Activated CD8-positive, alpha-beta T cell treated with anti-CD3 and anti-CD28 coated beads for 36 hours (primary cell): ENCODE measurements at regions of chr2 and their contacts with region 1.

Region 1: DNA sequence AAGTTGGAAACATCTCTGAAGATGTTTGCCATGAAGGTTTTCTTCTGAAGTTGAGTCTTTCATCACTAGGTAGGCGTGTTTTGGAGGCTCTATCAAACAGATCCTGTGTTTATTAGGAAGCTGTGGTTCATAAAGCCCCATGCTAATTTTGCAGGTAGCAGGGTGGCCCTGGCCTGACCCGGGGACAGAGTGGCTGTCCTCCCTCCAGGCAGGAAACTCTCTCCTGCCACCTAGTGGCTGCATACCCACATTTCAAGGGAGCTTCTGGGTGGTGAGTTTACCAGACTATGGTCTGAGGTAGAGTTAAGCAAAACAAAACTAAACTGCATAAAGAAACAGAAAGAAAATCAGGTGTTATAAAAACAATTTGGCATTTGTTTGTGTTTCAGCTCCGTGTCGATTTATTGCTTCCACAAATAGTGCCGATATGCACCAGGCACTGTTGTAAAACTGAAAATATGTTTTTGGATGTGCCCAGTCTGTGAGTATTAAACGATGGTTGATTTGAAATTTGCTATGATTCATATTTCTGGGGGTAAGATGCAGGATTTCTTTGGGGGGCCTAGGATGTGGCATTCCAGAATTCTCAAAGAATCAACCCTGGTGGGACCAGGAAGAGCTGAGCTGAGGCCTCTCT is 26.0 kb upstream of the IL37 start:
- DNase-seq: peak; percentile 81
- ATAC-seq: peak; percentile 79
- H3K4me3 Mint-ChIP-seq: no peak overlapping the region
- H3K27ac Mint-ChIP-seq: no peak overlapping the region
- H3K4me1 Mint-ChIP-seq: peaks cover 23% of the 10 kb centered on the region
- H3K27me3 Mint-ChIP-seq: no peaks in the 10 kb centered on the region
- CTCF ChIP-seq: peak; percentile 95

Region 2: DNA sequence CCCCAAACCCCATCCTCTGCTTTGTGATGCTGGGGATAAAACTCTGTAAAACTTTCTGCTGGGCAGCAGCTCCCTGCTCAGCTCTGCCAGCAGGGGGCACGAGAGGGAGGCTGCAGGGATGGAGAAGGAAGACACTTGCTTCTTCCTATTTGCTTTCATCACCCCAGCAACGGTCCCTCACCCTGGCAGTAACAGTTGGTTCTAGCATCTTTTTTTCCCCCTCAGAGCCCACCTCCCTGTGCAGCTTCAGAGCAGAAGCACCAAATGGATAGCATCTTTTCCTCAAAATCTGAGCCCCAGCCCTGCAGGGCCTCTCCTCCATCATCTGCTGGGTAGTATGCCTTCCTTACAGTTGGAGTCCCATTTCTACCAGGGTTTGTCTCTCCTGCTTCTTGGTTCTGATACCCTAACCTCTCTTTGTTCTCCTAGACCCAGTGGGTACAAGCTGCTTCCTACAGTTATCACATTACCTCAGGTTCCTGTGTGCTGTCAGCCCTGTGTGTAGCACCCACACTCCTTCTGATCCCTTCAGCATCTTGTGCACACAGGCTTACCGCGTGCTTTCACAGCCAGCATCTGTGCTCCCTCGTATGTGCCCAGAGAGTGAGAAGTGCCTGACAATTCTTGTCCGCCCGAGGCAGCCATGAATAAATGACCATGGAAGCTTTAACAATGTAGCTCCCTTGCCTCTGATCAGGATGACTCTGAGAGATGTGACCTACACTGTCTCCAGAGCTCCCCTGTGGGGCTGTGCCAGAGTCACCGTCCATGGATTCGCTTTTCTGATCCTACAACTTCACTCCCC is 135.0 kb before region 1 on chr2:
- CTCF ChIA-PET with region 1: interaction called, 102 read pairs
- POLR2A ChIA-PET with region 1: no interaction called
- intact Hi-C with region 1: loop called (anchors 2 kb)
- DNase-seq: peak; percentile 83
- ATAC-seq: peak; percentile 89
- H3K4me3 Mint-ChIP-seq: no peak overlapping the region
- H3K27ac Mint-ChIP-seq: peak overlapping the region; percentile 1
- H3K4me1 Mint-ChIP-seq: peaks cover 14% of the 10 kb centered on the region
- H3K27me3 Mint-ChIP-seq: no peaks in the 10 kb centered on the region
- CTCF ChIP-seq: peak; percentile 97

Region 3: DNA sequence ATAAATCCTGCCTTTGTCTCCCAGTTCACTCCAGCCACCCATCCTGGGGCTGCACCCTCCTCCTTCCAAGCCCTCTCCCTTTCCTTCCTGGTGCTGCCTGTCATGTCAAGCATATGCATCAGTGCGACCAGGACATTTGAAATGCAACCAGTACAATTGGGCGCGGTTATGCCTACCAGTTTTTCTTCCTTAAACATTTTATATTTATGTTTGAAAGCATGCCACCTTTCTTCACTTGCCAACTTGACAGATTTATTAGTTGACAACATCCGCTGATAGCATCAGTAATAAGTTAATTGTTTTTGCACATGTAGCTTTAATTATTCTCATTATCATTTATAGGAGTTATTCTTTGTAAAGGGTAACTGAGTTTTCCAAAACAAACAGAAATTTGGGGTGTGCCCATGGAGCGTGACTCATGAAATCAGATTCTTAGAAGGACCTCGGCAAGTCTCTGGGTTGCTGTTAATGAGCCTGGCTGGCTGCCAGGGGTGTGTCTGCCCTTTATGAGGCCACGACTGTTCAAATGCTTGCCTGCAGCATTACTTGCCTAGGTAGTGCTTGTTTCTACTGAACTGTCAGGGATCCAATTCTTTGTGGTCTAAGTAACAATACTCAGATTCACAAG is 15.6 kb before region 1 on chr2:
- CTCF ChIA-PET with region 1: interaction called, 11 read pairs
- POLR2A ChIA-PET with region 1: no interaction called
- intact Hi-C with region 1: no loop called
- DNase-seq: peak; percentile 79
- ATAC-seq: peak; percentile 71
- H3K4me3 Mint-ChIP-seq: no peak overlapping the region
- H3K27ac Mint-ChIP-seq: no peak overlapping the region
- H3K4me1 Mint-ChIP-seq: no peaks in the 10 kb centered on the region
- H3K27me3 Mint-ChIP-seq: peaks cover 26% of the 10 kb centered on the region
- CTCF ChIP-seq: no peak

Region 4: GRCh38 chr2:112920923-112921532 is 36.0 kb after region 1 on chr2:
- CTCF ChIA-PET with region 1: interaction called, 13 read pairs
- POLR2A ChIA-PET with region 1: interaction called, 6 read pairs
- intact Hi-C with region 1: no loop called
- DNase-seq: peak; percentile 38
- ATAC-seq: peak; percentile 63
- H3K4me3 Mint-ChIP-seq: no peak overlapping the region
- H3K27ac Mint-ChIP-seq: peak overlapping the region; percentile 63
- H3K4me1 Mint-ChIP-seq: peaks cover 23% of the 10 kb centered on the region
- H3K27me3 Mint-ChIP-seq: no peaks in the 10 kb centered on the region
- CTCF ChIP-seq: no peak

Region 5: DNA sequence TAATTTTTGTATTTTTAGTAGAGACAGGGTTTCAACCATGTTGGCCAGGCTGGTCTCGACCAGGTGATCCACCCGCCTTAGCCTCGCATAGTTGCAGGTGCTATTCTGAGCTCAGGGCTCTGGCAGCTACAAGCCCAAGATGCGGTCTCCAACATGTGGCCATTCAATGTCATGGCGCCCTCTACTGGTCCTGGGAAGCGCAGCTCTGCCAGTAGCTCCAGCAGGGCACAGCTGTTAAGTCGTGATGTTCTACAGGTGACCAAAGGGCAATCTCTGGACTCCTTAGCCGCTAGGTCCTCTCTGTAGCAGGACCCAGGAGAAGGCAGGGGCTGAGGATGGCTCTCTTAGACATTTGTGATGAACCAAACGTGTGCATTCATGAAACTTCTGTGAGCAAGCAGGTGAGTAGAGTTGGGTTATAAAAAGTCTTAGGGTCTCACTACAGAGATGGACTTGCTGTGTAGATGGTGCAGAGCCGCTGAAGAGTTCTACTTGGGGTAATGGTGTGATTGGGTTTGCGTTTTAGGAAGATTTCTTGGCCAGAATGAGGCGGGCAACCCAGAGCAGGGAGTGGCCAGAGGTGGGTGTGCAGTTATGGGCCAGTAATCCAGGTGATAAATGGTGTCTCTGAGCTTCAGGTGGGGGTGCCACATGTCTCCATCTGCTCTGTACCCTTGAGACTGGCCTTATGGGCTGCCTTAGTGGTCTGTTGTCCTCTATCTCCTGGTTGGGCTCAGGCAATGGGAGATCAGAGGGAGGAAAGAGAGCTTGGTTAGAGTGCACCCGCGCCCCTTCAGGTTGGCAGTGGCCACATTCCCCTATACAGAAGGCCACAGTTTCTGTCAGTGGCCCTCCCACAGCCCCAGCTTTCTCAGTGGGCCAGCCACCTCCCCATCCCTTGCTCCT is 57.0 kb after region 1 on chr2:
- CTCF ChIA-PET with region 1: interaction called, 59 read pairs
- POLR2A ChIA-PET with region 1: no interaction called
- intact Hi-C with region 1: no loop called
- DNase-seq: peak; percentile 88
- ATAC-seq: peak; percentile 99
- H3K4me3 Mint-ChIP-seq: no peak overlapping the region
- H3K27ac Mint-ChIP-seq: no peak overlapping the region
- H3K4me1 Mint-ChIP-seq: peaks cover 9% of the 10 kb centered on the region
- H3K27me3 Mint-ChIP-seq: no peaks in the 10 kb centered on the region
- CTCF ChIP-seq: peak; percentile 84

Region 6: DNA sequence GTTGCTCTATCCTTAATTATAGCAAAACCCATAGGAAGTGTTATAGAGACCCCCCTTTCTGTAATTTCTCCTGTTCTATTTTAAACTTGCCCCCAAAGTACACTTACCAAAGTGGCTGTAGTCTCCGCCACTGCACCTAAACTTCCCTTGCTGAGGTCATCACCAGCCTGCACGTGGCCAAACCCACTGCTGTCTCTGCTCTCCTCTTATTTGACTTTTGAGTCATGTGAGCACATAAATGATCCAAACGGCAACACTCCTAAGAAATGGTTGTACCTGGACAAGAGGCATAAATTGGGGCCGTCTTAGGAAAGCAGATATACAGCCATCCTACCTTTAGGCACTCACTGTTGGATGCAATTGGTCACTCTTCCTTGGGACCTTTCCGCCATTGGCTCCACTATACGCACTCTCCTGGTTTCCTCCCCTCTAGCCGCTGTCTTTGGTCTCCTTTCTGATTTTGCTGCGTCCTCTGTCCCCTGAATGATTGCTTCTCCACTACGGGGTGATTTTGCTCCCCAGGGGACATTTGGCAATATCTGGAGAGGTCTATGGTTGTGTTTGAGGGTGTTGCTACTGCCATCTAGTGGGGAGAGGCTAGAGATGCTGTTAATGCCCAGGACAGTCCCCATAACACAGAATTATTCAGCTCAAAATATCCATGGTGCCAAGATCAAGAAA is 73.6 kb after region 1 on chr2:
- CTCF ChIA-PET with region 1: interaction called, 19 read pairs
- POLR2A ChIA-PET with region 1: no interaction called
- intact Hi-C with region 1: no loop called
- DNase-seq: peak; percentile 45
- ATAC-seq: peak; percentile 91
- H3K4me3 Mint-ChIP-seq: no peak overlapping the region
- H3K27ac Mint-ChIP-seq: no peak overlapping the region
- H3K4me1 Mint-ChIP-seq: no peaks in the 10 kb centered on the region
- H3K27me3 Mint-ChIP-seq: no peaks in the 10 kb centered on the region
- CTCF ChIP-seq: peak; percentile 88